Calu3 (cell line): ENCODE measurements at regions of chr5 and their contacts with region 1.

Region 1: DNA sequence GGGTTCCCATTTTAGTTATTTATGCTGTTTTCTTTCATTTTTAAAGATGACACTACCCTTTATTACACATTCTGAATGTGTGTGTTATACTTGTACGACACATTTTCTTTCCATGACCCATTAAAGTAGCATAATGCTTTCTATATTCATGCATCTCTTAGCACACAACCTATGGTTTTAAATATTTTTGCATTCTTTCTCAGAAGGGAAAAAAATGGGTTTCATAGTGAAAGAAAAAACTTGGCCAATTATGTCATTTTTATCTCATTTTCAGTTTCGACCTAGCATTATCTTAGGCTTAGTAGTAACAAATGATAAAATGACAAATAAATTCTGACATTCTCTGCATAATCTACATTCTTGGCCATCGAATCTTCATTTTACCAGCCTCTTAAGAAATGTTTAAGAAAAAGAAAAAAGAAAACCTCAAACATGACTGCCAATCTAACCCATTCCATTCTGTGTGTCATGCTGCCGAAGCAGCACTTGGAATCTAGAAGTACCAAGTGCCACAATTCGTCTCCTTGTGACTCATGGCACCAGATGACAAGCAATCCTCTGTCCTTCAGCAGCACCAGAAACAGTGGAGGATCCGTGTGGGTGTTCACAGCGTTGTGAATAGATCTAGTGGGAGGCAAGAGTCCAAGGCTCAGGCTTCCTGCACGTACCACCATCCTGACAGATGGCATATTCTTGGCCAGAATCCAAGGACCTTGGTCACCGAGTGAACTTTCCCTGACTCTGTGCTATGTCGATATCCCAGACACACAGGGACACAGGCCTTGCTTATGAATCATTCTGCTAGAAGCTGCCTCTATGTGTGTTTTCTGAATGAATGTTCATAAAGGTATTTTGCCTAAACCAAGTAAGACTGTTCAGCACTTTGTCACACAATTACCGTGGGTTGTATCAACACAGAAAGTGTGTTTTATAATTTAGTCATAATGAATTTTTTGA is 502.7 kb downstream of the NR2F1-AS1 start:
- DNase-seq: peak; percentile 95
- H3K4me3 Mint-ChIP-seq: peak overlapping the region; percentile 61
- H3K27ac Mint-ChIP-seq: peak overlapping the region; percentile 83
- H3K4me1 Mint-ChIP-seq: peaks cover 45% of the 10 kb centered on the region
- H3K27me3 Mint-ChIP-seq: no peaks in the 10 kb centered on the region
- CTCF ChIP-seq: no peak

Region 2: GRCh38 chr5:92969781-92970237 is 108.6 kb before region 1 on chr5:
- CTCF ChIA-PET with region 1: no interaction called
- intact Hi-C with region 1: loop called (anchors 1 kb)
- DNase-seq: peak; percentile 61
- H3K4me3 Mint-ChIP-seq: peak overlapping the region; percentile 54
- H3K27ac Mint-ChIP-seq: peak overlapping the region; percentile 59
- H3K4me1 Mint-ChIP-seq: peaks cover 40% of the 10 kb centered on the region
- H3K27me3 Mint-ChIP-seq: no peaks in the 10 kb centered on the region
- CTCF ChIP-seq: no peak

Region 3: DNA sequence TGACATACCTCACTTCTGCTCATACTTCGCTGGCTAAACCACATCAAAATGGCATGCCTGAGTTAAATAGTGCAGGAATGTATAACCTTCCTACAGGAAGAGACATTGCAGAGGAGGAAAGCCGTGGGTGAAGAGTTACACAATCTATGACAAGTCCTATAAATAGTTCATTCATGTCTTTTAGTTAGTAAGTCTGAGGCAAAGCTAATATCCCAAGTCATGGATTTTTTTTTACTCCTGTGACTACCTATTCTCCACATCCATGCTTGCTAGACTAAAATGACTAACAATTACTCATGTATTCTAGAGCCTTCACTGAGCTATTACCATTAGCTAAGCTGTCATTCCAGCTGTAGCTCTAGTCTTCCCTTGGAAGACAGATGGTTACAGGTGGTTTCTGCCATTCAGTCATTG is 111.4 kb after region 1 on chr5:
- CTCF ChIA-PET with region 1: no interaction called
- intact Hi-C with region 1: loop called (anchors 2 kb)
- DNase-seq: no peak
- H3K4me3 Mint-ChIP-seq: no peak overlapping the region
- H3K27ac Mint-ChIP-seq: peak overlapping the region; percentile 55
- H3K4me1 Mint-ChIP-seq: peaks cover 80% of the 10 kb centered on the region
- H3K27me3 Mint-ChIP-seq: no peaks in the 10 kb centered on the region
- CTCF ChIP-seq: no peak

Region 4: GRCh38 chr5:93236804-93237421 is 158.6 kb after region 1 on chr5:
- CTCF ChIA-PET with region 1: no interaction called
- intact Hi-C with region 1: no loop called
- DNase-seq: no peak
- H3K4me3 Mint-ChIP-seq: no peak overlapping the region
- H3K27ac Mint-ChIP-seq: no peak overlapping the region
- H3K4me1 Mint-ChIP-seq: peaks cover 9% of the 10 kb centered on the region
- H3K27me3 Mint-ChIP-seq: no peaks in the 10 kb centered on the region
- CTCF ChIP-seq: no peak

Region 5: DNA sequence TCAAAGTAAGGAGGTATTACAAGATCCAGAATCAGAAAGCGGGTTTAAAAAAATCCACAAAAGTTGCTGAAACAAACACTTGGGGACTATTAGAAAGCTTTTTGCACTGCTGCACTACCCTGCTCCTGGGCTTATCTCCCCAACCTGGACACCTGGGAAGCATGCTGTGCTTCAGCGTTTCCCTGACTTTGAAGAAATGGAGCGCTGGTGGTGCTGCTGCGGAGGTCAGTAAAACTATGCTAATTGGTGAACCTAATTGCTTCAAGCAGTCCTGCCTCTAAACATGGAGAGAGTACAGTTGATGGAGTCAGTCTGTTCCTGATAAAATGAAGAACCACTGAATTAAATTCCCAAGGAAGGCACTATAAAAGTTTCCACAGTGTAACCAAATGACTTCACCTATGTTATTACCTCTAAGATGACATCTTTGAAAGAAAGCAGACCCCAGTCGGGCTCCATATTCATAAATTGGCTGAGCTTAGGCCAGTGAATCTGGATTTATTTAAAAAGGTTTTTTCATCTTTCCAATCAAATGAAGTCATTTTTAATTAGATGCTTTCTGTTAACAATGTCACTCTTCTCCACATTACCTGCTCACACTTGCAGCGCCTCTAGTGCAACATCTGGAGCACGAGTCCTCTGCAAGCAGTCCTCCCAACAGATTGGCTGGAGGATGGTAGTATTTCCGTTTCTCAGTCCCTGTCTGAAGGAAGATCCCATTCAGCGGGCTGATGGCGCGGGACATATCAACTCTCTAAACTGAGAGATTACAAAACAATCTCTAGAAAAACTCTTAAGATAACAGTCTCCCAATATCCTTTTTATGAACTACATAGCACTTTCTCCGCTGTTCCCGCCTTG is 491.2 kb after region 1 on chr5:
- CTCF ChIA-PET with region 1: no interaction called
- intact Hi-C with region 1: loop called (anchors 5 kb)
- DNase-seq: no peak
- H3K4me3 Mint-ChIP-seq: no peak overlapping the region
- H3K27ac Mint-ChIP-seq: no peak overlapping the region
- H3K4me1 Mint-ChIP-seq: peaks cover 9% of the 10 kb centered on the region
- H3K27me3 Mint-ChIP-seq: no peaks in the 10 kb centered on the region
- CTCF ChIP-seq: no peak